CD8-positive, alpha-beta memory T cell (primary cell): ENCODE measurements at regions of chr1 and their contacts with region 1.

Region 1: GRCh38 chr1:36149237-36149972 is at the start of gene TRAPPC3:
- DNase-seq: peak; percentile 99 to 100 (median 99)
- H3K4me3 ChIP-seq: peak within 1 kb of the TSS; percentile 66
- H3K4me3 Mint-ChIP-seq: peak within 1 kb of the TSS; percentile 95 to 100 (median 99)
- H3K27ac ChIP-seq: peak within 1 kb of the TSS; percentile 87
- H3K27ac Mint-ChIP-seq: peak within 1 kb of the TSS; percentile 98 to 100 (median 99)
- H3K4me1 ChIP-seq: peaks cover 56% of the 10 kb centered on the region
- H3K4me1 Mint-ChIP-seq: peaks cover 65 to 81% (median 73%) of the 10 kb centered on the region in 3 donors
- H3K27me3 ChIP-seq: no peaks in the 10 kb centered on the region
- H3K27me3 Mint-ChIP-seq: peaks cover 0 to 1% of the 10 kb centered on the region in 2 donors
- total RNA-seq, gene TRAPPC3: 61.7 to 63.1 TPM

Region 2: DNA sequence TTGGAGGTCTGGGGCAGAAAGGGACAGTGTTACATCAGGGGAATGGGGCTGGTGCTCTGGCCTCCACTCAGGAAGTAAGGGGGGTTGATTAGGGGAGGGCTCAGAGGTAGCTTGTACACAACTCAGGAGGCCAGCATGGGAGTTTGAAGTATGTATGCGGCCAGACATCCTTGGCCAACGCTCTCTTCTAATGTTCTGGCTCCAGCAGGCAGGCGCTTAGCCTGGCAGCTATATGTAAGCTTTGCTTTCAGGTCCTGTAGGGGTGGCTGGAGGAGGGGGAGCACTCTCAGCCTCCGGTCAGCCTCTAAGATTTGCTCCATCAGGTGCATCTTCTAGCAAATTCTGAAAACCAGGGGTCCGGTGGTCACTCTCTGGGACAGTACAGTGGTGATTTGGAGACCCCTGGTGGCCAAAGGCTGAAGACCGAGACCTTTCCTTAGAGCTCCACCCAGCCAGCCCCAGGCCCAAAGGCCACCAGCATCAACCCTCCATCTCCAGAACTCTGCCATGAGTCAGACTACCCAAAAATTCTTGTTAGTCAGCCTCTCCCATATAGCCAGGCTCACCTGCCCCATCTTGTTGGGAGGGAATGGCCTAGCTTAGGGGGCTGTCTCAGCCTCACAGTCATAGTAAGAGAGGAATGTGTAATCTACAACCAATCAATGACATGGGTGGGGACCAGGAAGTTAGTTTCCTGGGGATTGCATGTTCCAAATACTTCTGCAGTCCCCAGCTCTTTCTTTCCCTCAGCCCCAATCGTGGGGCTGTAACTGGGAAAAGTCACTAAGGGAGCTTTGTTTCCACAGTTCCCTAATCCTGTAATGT is 14.7 kb before region 1 on chr1:
- CTCF ChIA-PET with region 1: interaction called, 16 read pairs
- POLR2A ChIA-PET with region 1: no interaction called
- DNase-seq: no peak
- H3K4me3 ChIP-seq: no peak overlapping the region
- H3K4me3 Mint-ChIP-seq: no peak overlapping the region
- H3K27ac ChIP-seq: no peak overlapping the region
- H3K27ac Mint-ChIP-seq: peak overlapping the region in 2 of 8 donors; percentile 58 to 76
- H3K4me1 ChIP-seq: no peaks in the 10 kb centered on the region
- H3K4me1 Mint-ChIP-seq: peaks cover 0 to 8% (median 3%) of the 10 kb centered on the region in 3 donors
- H3K27me3 ChIP-seq: no peaks in the 10 kb centered on the region
- H3K27me3 Mint-ChIP-seq: no peaks in the 10 kb centered on the region

Region 3: DNA sequence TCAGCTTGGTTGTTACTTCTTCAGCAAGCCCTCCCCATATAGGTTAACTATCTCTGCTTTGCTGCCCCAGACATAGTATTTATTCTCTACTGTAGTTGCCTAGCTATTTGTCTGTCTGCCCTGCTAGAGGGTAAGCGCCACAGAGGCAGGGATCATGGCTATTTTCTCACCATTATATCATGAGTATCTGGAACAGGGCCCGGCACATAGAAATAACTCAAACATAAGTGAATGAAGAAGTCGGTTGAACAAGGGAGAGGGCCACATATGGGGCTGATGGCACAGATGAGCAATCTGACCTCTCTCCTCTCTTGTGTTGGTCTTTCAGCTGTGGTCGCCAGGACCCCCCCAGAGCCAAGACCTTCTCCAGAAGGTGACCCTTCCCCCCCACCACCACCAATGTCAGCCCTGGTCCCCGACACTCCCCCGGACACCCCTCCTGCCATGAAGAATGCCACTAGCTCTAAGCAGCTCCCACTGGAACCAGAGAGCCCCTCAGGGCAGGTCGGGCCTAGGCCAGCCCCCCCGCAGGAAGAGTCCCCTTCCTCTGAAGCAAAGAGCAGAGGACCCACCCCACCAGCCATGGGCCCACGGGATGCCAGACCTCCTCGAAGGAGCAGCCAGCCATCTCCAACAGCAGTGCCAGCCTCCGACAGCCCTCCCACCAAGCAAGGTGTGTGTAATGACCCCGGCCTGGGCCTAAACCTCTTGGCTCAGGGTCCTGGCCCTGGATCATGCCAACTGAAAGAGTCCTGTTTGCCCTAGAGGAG is 21.4 kb after region 1 on chr1:
- CTCF ChIA-PET with region 1: interaction called, 14 read pairs
- POLR2A ChIA-PET with region 1: interaction called, 3 read pairs
- DNase-seq: no peak
- H3K4me3 ChIP-seq: no peak overlapping the region
- H3K4me3 Mint-ChIP-seq: peak overlapping the region in 1 of 7 donors; percentile 65
- H3K27ac ChIP-seq: no peak overlapping the region
- H3K27ac Mint-ChIP-seq: peak overlapping the region in 7 of 8 donors; percentile 19 to 88 (median 77)
- H3K4me1 ChIP-seq: peaks cover 20% of the 10 kb centered on the region
- H3K4me1 Mint-ChIP-seq: peaks cover 30 to 51% (median 36%) of the 10 kb centered on the region in 3 donors
- H3K27me3 ChIP-seq: no peaks in the 10 kb centered on the region
- H3K27me3 Mint-ChIP-seq: no peaks in the 10 kb centered on the region

Region 4: DNA sequence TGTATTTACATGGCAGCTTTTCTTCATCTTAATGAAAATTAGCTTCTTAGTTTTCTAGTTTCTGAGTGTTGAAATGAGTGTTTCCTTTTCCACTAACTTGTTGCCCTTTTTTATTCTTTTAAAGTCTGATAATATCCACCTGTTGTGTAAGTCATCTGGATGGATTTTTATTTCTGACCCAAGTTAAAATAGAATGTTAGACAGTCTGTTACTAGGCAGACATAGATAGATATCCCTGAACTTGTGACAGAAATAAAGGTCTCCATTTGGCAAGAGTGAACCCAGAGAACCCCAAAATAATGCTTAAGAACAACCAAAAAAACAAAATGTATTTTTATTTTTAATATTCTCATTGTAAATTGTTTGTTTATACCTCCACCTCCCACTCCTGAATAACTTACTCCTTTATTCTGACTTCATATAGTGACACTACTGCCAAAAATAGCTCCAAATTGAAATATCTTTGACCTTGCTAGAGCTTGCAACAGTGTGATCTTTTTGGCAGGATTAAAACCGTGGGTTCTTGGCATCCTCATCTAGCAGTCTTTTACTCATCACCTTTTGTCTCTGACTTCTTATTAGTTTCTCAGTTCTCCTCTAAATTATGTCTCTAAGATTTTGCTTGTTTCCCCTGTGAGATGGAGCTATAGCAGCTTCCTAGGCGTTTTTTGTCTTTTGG is 129.8 kb after region 1 on chr1:
- CTCF ChIA-PET with region 1: interaction called, 18 read pairs
- POLR2A ChIA-PET with region 1: no interaction called
- DNase-seq: no peak
- H3K4me3 ChIP-seq: no peak overlapping the region
- H3K4me3 Mint-ChIP-seq: no peak overlapping the region
- H3K27ac ChIP-seq: no peak overlapping the region
- H3K27ac Mint-ChIP-seq: peak overlapping the region in 7 of 8 donors; percentile 43 to 80 (median 56)
- H3K4me1 ChIP-seq: no peaks in the 10 kb centered on the region
- H3K4me1 Mint-ChIP-seq: peaks cover 13 to 31% (median 22%) of the 10 kb centered on the region in 3 donors
- H3K27me3 ChIP-seq: no peaks in the 10 kb centered on the region
- H3K27me3 Mint-ChIP-seq: no peaks in the 10 kb centered on the region